B cell (primary cell): ENCODE measurements at regions of chrX and their contacts with region 1.

Region 1: DNA sequence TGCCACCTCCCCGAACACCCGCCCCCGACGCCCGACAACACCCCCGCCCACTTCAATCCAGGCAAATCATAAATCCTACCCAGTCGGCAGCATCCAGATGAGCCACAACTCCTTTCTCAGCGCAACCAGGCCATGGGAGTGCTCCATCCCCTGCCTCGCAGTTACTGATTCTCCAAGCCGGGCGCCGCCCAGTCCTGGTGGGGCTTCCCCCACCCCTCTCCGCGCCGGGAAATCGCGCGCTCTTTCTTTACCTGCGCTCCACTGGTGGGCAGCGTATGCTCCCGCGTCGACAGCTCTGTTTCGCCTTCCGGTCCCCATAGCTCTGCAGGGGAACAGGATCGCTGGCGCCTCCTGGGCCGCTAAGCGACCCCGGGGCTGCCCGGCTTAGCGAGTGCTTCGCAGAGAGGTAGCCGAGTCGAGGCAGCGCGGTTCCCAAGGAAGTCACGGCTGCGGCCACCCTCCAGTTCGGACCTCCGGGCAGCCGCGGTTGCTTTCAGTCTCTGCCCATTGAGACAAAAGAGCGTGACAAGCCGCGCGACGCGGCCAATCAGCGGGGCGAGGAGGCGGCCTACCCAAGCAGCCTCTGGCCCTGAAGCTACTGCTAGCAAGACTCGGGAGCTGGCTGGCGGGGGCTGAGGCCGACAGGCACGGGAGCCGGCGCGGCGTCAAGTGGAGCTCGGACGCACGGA is 43.7 kb upstream of the TMSB15B start:
- DNase-seq: peak; percentile 69
- ATAC-seq: peak; percentile 75
- H3K4me3 ChIP-seq: peak overlapping the region in 4 of 5 experiments; percentile 65 to 72 (median 67)
- H3K4me3 Mint-ChIP-seq: peak overlapping the region; percentile 94
- H3K27ac ChIP-seq: peak overlapping the region; percentile 53 to 70
- H3K27ac Mint-ChIP-seq: peak overlapping the region; percentile 91
- H3K4me1 ChIP-seq: peaks cover 0 to 5% of the 10 kb centered on the region in 2 donors
- H3K4me1 Mint-ChIP-seq: peaks cover 12% of the 10 kb centered on the region
- H3K27me3 ChIP-seq: no peaks in the 10 kb centered on the region
- H3K27me3 Mint-ChIP-seq: no peaks in the 10 kb centered on the region
- CTCF ChIP-seq: no peak

Region 2: GRCh38 chrX:103774070-103774642 is 144.6 kb before region 1 on chrX:
- CTCF ChIA-PET with region 1: no interaction called
- POLR2A ChIA-PET with region 1: no interaction called
- intact Hi-C with region 1: no loop called
- DNase-seq: no peak
- ATAC-seq: no peak
- H3K4me3 ChIP-seq: no peak overlapping the region
- H3K4me3 Mint-ChIP-seq: no peak overlapping the region
- H3K27ac ChIP-seq: no peak overlapping the region
- H3K27ac Mint-ChIP-seq: no peak overlapping the region
- H3K4me1 ChIP-seq: no peaks in the 10 kb centered on the region
- H3K4me1 Mint-ChIP-seq: no peaks in the 10 kb centered on the region
- H3K27me3 ChIP-seq: no peaks in the 10 kb centered on the region
- H3K27me3 Mint-ChIP-seq: peaks cover 15% of the 10 kb centered on the region
- CTCF ChIP-seq: no peak

Region 3: GRCh38 chrX:103831803-103832544 is 86.8 kb before region 1 on chrX and contains the start of gene RAB9B:
- CTCF ChIA-PET with region 1: interaction called, 3 read pairs
- POLR2A ChIA-PET with region 1: no interaction called
- intact Hi-C with region 1: loop called (anchors 5 kb)
- DNase-seq: no peak
- ATAC-seq: peak; percentile 93
- H3K4me3 ChIP-seq: peak within 1 kb of the TSS in 4 of 5 experiments; percentile 64 to 72 (median 68)
- H3K4me3 Mint-ChIP-seq: peak within 1 kb of the TSS; percentile 94
- H3K27ac ChIP-seq: no peak within 1 kb of the TSS
- H3K27ac Mint-ChIP-seq: peak within 1 kb of the TSS; percentile 46
- H3K4me1 ChIP-seq: peaks cover 4 to 5% of the 10 kb centered on the region in 2 donors
- H3K4me1 Mint-ChIP-seq: peaks cover 5% of the 10 kb centered on the region
- H3K27me3 ChIP-seq: no peaks in the 10 kb centered on the region
- H3K27me3 Mint-ChIP-seq: peaks cover 3% of the 10 kb centered on the region
- CTCF ChIP-seq: no peak
- total RNA-seq, gene RAB9B: 0.44 and 0.75 TPM in 2 replicates

Region 4: DNA sequence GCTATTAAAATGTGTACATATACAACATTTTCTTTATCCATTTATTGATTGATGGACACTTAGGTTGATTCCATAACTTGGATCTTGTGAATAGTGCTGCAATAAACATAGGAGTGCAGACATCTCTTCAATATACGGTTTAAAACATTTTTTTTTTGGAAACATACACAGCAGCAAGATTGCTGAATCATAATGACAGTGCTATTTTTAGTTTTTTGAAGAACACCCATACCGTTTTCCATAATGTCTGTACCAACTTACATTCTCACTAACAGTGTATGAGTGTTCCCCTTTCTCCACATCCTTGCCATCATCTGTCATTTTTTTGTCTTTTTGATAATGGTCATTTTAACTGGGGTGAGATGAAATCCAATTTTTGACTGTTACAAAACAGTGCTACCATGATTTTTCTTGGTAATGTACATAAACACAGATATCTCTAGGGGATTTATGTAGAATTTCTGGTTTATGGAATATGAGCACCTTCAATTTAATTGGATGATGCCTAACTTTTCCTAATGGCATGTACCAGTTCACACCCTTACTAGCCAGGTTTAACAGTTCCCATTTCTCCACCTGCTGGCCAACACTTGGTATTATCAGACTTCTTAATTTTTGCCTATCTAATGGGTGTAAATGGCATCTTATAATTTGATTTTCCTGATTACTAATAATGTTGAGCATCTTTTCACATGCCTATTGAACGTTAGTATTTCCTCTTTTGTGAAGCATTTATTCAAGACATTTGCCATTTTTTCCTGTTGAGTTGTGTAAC is 22.7 kb after region 1 on chrX:
- CTCF ChIA-PET with region 1: interaction called, 3 read pairs
- POLR2A ChIA-PET with region 1: no interaction called
- intact Hi-C with region 1: loop called (anchors 1 kb)
- DNase-seq: peak; percentile 37
- ATAC-seq: no peak
- H3K4me3 ChIP-seq: no peak overlapping the region
- H3K4me3 Mint-ChIP-seq: no peak overlapping the region
- H3K27ac ChIP-seq: no peak overlapping the region
- H3K27ac Mint-ChIP-seq: no peak overlapping the region
- H3K4me1 ChIP-seq: no peaks in the 10 kb centered on the region
- H3K4me1 Mint-ChIP-seq: peaks cover 15% of the 10 kb centered on the region
- H3K27me3 ChIP-seq: no peaks in the 10 kb centered on the region
- H3K27me3 Mint-ChIP-seq: no peaks in the 10 kb centered on the region
- CTCF ChIP-seq: peak; percentile 65